Heart left ventricle (tissue), 16 donors: ENCODE measurements at regions of chr2 and their contacts with region 1.

Region 1: DNA sequence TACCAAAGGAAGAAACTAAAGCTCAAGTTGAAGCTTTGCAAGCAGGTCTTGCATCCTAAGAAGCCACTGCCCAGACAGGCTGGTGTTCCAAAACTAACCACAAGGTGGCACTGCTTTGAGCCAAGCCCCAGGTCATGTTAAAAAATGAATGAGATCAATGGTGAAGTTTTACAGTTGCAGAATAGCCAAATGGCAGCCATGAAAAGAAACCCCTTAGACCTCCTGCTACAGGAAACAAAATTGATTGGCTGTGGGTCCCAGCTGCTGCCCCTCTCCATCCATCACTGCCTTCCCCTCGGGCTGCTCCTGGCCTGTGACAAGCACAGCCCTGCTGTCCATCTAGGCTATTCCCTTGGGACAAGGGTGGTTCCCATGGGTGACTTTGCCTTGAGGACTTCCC is 20.7 kb upstream of the MREG start:
- DNase-seq: peak; percentile 30 to 64 (median 49)
- ATAC-seq: peak in 3 of 4 donors; percentile 49 to 68 (median 52)
- H3K4me3 ChIP-seq: no peak overlapping the region
- H3K27ac ChIP-seq: no peak overlapping the region
- H3K4me1 ChIP-seq: no peaks in the 10 kb centered on the region
- H3K27me3 ChIP-seq: no peaks in the 10 kb centered on the region
- CTCF ChIP-seq: peak; percentile 68 to 93 (median 88)
- POLR2A ChIP-seq: no peak

Region 2: DNA sequence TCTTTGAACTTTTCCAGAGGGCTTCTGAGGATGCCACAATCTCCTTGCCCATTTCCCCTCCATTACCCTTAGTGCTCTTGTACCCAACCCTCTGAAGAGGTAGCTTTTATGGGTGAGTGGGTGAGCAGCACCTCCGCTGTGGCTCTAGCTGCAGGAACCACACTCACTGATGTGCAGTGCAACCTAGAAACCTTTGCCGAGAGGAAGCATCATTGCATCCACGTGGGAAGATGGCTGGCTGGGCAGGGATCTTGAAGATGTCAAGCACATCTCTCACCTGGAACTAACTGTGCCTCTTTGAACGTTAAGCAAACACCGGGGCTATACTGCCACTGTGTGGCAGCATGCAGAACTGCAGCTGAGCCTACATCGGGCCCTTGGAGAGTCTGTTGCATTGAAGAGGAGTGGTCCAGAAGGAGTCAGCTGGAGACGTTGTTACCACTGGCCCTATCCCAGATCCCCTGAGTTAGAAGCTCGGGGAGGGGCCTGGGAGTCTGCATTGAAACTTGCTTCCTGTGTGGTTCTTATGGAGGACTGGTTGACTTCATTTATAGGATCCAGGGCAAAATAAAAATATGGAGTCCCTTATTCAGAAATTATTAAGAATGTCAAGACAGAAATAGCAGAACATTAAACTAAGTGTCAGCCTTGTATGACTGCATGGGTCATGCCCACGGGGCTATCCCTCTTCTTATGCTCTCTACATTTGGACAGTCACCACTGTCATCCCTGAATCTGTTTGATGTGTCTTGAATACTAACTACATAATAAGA is 632.6 kb after region 1 on chr2:
- intact Hi-C with region 1: loop called in 2 of 10 experiments (anchors 5 to 10 kb)
- DNase-seq: peak; percentile 57 to 83 (median 60)
- ATAC-seq: peak; percentile 48 to 73 (median 64)
- H3K4me3 ChIP-seq: no peak overlapping the region
- H3K27ac ChIP-seq: no peak overlapping the region
- H3K4me1 ChIP-seq: peaks cover 0 to 22% (median 14%) of the 10 kb centered on the region in 12 donors
- H3K27me3 ChIP-seq: no peaks in the 10 kb centered on the region
- CTCF ChIP-seq: peak in 11 of 12 donors; percentile 92 to 99 (median 98)
- POLR2A ChIP-seq: no peak